Endothelial cell of umbilical vein (primary cell): ENCODE measurements at regions of chr2 and their contacts with region 1.

Region 1: GRCh38 chr2:98649135-98649991 is 41.0 kb downstream of the UNC50 start:
- DNase-seq: peak; percentile 87
- H3K4me3 ChIP-seq: no peak overlapping the region
- H3K27ac ChIP-seq: peak overlapping the region; percentile 54
- H3K4me1 ChIP-seq: peaks cover 4% of the 10 kb centered on the region
- H3K27me3 ChIP-seq: no peaks in the 10 kb centered on the region
- CTCF ChIP-seq: peak; percentile 97
- POLR2A ChIP-seq: no peak

Region 2: DNA sequence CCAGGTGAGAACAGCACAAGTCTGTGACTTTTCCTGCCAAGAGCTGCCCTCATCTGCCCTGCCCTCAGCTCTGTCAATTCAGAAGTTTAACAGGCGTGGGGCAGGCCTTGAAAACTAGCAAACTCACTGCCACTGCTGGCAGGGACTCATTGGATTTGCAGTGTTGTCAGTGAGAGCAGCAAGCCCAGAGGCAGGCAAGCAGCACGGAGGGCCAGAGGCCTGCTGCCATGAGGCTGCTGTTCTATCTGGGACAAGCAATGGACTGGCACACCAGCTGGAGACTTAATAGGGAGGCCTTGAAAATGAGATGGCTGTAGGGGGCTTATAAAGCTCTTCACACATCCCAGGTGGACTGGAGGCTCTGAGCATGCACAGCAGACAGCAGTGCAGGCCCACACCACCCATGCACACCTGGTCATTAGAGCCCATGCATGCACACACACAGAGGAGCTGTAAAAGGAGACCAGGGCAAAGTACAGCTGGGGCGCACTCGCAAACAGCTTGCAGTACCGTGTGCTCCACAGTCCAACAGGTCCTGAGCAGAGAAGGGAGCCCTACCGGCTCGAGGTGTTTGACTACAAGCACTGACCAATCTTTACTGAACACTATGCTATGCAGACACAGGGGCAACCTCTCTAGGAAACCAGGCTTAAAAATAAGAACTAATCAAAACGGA is 52.9 kb after region 1 on chr2:
- CTCF ChIA-PET with region 1: interaction called, 16 read pairs
- POLR2A ChIA-PET with region 1: no interaction called
- dilution Hi-C with region 1: no loop called
- intact Hi-C with region 1: loop called (anchors 5 kb)
- DNase-seq: peak; percentile 43
- H3K4me3 ChIP-seq: no peak overlapping the region
- H3K27ac ChIP-seq: peak overlapping the region; percentile 50
- H3K4me1 ChIP-seq: peaks cover 36% of the 10 kb centered on the region
- H3K27me3 ChIP-seq: no peaks in the 10 kb centered on the region
- CTCF ChIP-seq: no peak
- POLR2A ChIP-seq: no peak

Region 3: GRCh38 chr2:98726205-98726604 is 76.8 kb after region 1 on chr2:
- CTCF ChIA-PET with region 1: interaction called, 37 read pairs
- POLR2A ChIA-PET with region 1: interaction called, 5 read pairs
- dilution Hi-C with region 1: no loop called
- intact Hi-C with region 1: loop called (anchors 1 kb)
- DNase-seq: peak; percentile 77
- H3K4me3 ChIP-seq: peak overlapping the region; percentile 1 to 31 (median 4)
- H3K27ac ChIP-seq: peak overlapping the region; percentile 68
- H3K4me1 ChIP-seq: peaks cover 44% of the 10 kb centered on the region
- H3K27me3 ChIP-seq: no peaks in the 10 kb centered on the region
- CTCF ChIP-seq: no peak
- POLR2A ChIP-seq: no peak

Region 4: GRCh38 chr2:98757904-98758421 is 108.6 kb after region 1 on chr2:
- CTCF ChIA-PET with region 1: interaction called, 14 read pairs
- POLR2A ChIA-PET with region 1: no interaction called
- dilution Hi-C with region 1: no loop called
- intact Hi-C with region 1: no loop called
- DNase-seq: peak; percentile 98
- H3K4me3 ChIP-seq: no peak overlapping the region
- H3K27ac ChIP-seq: peak overlapping the region; percentile 66
- H3K4me1 ChIP-seq: peaks cover 20% of the 10 kb centered on the region
- H3K27me3 ChIP-seq: no peaks in the 10 kb centered on the region
- CTCF ChIP-seq: peak in 1 of 2 donors; percentile 3
- POLR2A ChIP-seq: peak; percentile 62

Region 5: DNA sequence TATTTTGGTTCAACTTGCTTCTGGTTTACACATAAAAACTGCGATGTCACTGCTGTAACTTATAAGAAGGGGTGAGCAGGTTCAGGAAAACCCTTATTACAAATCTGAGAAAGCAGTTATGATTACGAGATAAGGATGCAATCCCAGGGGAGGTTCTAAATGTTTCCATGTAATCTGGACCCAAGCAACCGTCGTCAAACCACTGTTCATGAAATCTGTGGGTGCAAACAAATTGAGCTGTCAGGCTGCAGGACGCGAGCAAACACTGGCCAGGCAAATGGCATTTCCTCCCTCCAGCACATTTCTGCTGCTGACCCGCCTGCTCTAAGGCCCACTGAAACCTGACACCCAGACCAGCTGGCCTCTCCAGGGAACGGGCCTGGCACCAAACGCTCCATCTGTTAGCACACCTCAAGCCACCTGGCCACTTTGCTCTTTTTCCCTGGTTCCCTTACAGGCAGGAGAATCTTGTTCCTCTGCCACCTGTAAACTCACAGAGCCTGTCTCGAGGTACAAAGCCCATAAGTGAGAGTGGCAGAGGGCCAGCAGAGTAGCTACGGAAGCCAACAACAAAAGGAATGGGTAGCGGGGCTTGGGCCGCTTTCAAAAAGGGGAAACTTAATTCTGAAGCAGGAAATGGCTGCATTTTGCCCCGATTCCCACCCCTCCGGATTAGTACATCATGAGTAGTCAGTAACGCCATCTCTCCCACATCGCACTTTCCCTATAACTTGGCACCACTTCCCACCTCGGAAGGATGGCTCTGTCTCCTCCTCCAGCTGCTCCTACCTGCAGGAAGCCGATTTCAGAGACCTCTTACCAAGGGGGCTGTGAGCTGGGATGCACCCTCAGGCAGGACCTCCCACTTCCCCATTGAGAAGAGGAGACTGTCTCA is 260.2 kb after region 1 on chr2:
- CTCF ChIA-PET with region 1: interaction called, 3 read pairs
- POLR2A ChIA-PET with region 1: no interaction called
- dilution Hi-C with region 1: no loop called
- intact Hi-C with region 1: loop called (anchors 1 kb)
- DNase-seq: peak; percentile 91
- H3K4me3 ChIP-seq: peak overlapping the region in 1 of 3 experiments; percentile 25
- H3K27ac ChIP-seq: peak overlapping the region; percentile 84
- H3K4me1 ChIP-seq: peaks cover 38% of the 10 kb centered on the region
- H3K27me3 ChIP-seq: no peaks in the 10 kb centered on the region
- CTCF ChIP-seq: no peak
- POLR2A ChIP-seq: no peak

Region 6: DNA sequence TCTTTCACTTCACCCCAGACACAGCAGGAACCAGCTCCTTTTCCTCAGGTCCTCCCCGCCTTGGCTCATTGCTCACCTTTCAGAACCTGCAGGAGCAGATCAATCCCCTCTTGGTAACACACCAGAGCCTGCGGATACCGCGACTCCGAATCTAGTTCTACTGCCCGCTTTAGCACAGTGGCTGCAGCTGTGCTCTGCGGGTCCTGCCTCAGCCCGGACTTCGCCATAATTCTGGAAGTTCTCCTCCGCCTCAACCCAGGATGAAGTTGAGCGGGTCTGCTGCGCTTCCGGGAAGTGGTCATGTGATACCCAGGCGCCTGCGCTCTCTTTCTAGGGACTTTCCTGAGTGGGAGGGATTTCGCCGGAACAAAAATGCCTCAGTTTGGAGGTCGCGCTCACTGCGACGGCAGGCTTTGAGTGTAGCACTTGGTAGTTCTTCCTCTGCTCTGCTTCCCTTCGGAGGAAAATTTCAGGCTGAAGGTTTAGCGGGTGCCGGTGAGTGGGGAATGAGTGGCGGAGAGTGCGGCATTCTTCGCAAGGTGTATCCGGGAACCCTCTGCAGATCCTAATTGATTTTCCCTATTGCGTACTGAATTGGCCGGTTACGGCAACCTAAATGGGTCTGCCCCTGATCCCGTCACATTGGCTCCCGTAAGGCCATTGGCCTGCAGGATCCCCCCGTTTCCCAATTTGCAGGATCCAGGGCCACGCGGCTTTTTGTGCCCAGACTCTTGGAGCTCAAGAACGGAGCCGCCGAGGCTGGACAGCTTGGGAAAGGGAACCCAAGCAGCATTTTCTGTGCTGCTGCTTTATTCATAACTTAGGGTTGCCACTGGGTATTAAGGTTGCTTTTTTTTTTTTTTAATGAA is 531.6 kb after region 1 on chr2 and contains the starts of genes MITD1 and MRPL30:
- CTCF ChIA-PET with region 1: interaction called, 10 read pairs
- POLR2A ChIA-PET with region 1: no interaction called
- dilution Hi-C with region 1: no loop called
- intact Hi-C with region 1: no loop called
- DNase-seq: peak; percentile 99
- H3K4me3 ChIP-seq: peak within 1 kb of the TSS; percentile 67 to 93 (median 74)
- H3K27ac ChIP-seq: peak within 1 kb of the TSS; percentile 48
- H3K4me1 ChIP-seq: peaks cover 17% of the 10 kb centered on the region
- H3K27me3 ChIP-seq: no peaks in the 10 kb centered on the region
- CTCF ChIP-seq: no peak
- POLR2A ChIP-seq: peak; percentile 80
- total RNA-seq, gene MITD1: 29.8 and 30.0 TPM in 2 replicates
- total RNA-seq, gene MRPL30: 28.4 and 30.7 TPM in 2 replicates

Region 7: DNA sequence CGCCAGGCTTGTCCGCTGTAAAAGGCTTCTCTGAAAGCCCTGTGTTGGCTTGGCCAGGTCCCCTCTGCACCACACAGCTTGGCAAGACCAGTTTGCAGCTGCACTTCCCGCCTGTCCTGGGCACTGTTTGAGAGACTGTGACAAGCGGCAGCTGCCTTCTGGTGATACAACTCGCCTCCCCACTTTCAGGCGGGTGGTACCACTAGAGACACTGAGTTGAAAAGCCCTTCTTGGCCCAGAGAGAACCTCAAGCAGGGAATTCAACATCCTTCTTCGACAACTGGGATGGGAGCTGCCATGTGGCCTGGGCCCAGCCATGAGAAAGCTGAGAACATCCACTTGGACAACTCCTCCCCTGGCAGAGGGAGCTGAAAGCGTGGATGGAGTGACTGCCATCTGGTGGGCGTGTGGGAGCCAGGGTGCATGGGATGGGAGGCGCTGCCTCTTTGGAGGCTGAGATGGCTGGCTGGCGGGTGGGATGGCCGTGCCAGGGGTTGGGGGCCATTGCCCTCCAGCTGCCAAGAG is 965.9 kb after region 1 on chr2:
- CTCF ChIA-PET with region 1: no interaction called
- POLR2A ChIA-PET with region 1: no interaction called
- dilution Hi-C with region 1: no loop called
- intact Hi-C with region 1: no loop called
- DNase-seq: no peak
- H3K4me3 ChIP-seq: no peak overlapping the region
- H3K27ac ChIP-seq: no peak overlapping the region
- H3K4me1 ChIP-seq: no peaks in the 10 kb centered on the region
- H3K27me3 ChIP-seq: peaks cover 4 to 6% of the 10 kb centered on the region in 2 experiments
- CTCF ChIP-seq: peak in 1 of 2 donors; percentile 15
- POLR2A ChIP-seq: no peak